HCT116 (cell line): ENCODE measurements at regions of chr12 and their contacts with region 1.

Region 1: DNA sequence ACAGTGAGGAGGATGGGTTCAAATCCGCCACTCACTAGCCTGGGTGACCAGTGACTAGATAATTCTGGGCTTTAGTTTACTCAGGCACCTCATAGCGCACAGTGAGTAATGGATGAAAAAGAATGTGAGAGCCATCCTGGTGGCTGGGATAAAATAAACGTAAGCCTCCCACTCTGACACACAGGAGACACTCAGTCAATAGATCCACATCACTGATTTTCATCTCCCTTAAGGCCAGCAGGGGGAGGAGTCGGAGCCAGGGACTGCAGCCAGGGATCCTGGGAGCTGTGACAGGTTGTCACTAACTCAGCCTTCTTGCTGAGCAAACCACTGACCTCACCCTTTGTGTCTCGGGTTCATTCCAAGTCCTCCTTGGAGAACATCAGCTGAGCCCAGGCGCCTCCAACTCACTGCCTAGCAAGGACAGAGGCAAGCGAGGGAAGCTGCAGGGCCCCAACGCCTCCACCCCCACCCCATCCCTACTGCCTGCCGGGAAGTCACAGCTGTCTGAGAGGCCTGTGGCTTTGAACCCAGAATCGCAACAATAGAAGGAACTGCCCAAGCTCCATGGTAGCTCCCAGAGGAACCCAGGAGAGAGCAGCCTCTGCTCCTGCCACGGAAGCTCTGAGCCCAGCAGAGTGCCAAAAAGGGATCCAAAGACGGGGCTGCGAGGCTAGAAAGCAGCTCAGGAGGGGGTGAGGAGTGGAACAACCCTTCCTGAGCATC is 30.7 kb downstream of the PXN start:
- DNase-seq: peak; percentile 61
- ATAC-seq: peak; percentile 32
- H3K4me3 ChIP-seq: peak overlapping the region in 1 of 2 experiments; percentile 11; a peak in 1 of 4 replicates
- H3K27ac ChIP-seq: peak overlapping the region; percentile 100
- H3K4me1 ChIP-seq: peaks cover 88 to 99% of the 10 kb centered on the region in 2 experiments
- H3K27me3 ChIP-seq: no peaks in the 10 kb centered on the region
- CTCF ChIP-seq: peak in 2 of 3 experiments; percentile 56 to 60; a peak in 4 of 6 replicates
- POLR2A ChIP-seq: no peak
- RAD21 ChIP-seq: no peak

Region 2: DNA sequence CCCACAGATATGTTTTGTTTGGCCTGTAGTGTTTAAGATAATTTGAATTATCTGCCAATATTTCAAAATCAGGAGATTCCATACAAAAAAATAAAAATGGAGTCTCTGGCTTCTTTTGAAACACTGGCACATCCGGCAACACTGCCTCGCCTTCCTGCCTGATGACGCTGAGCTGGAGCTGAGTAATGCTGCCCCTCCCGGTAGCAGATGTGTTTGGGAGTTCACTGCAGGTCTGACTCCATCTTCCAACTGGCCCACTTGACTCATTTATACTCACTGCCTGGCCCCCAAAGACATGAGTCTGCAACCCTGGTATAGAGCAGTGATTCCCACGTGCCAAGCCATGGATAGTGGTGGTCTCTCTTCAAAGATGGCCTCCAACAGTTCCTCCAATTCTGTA is 365.1 kb before region 1 on chr12:
- CTCF ChIA-PET with region 1: no interaction called
- POLR2A ChIA-PET with region 1: no interaction called
- RAD21 ChIA-PET with region 1: no interaction called
- intact Hi-C with region 1: no loop called
- DNase-seq: peak; percentile 12
- ATAC-seq: peak; percentile 89
- H3K4me3 ChIP-seq: no peak overlapping the region
- H3K27ac ChIP-seq: no peak overlapping the region
- H3K4me1 ChIP-seq: peaks cover 2 to 12% of the 10 kb centered on the region in 2 experiments; a peak in 2 of 4 replicates
- H3K27me3 ChIP-seq: no peaks in the 10 kb centered on the region
- CTCF ChIP-seq: 0 out of 6 replicates have a peak, but pooled peaks of 1 of the 3 experiments have one; percentile 13
- POLR2A ChIP-seq: no peak
- RAD21 ChIP-seq: no peak

Region 3: GRCh38 chr12:120249875-120250795 is 15.3 kb after region 1 on chr12:
- CTCF ChIA-PET with region 1: interaction called, 21 read pairs
- POLR2A ChIA-PET with region 1: interaction called, 22 read pairs
- RAD21 ChIA-PET with region 1: interaction called in 1 of 2 experiments, 4 read pairs
- intact Hi-C with region 1: no loop called
- DNase-seq: no peak
- ATAC-seq: no peak
- H3K4me3 ChIP-seq: no peak overlapping the region
- H3K27ac ChIP-seq: peak overlapping the region; percentile 72
- H3K4me1 ChIP-seq: peaks cover 53 to 84% of the 10 kb centered on the region in 2 experiments
- H3K27me3 ChIP-seq: no peaks in the 10 kb centered on the region
- CTCF ChIP-seq: no peak
- POLR2A ChIP-seq: no peak
- RAD21 ChIP-seq: no peak

Region 4: GRCh38 chr12:120265473-120266179 is 30.8 kb after region 1 on chr12 and contains the start of gene PXN:
- CTCF ChIA-PET with region 1: interaction called, 181 read pairs
- POLR2A ChIA-PET with region 1: interaction called, 123 read pairs
- RAD21 ChIA-PET with region 1: interaction called, 33 to 62 read pairs
- intact Hi-C with region 1: no loop called
- DNase-seq: peak; percentile 67
- ATAC-seq: peak; percentile 84
- H3K4me3 ChIP-seq: peak within 1 kb of the TSS; percentile 66 to 85
- H3K27ac ChIP-seq: peak within 1 kb of the TSS; percentile 93
- H3K4me1 ChIP-seq: peaks cover 41 to 55% of the 10 kb centered on the region in 2 experiments
- H3K27me3 ChIP-seq: no peaks in the 10 kb centered on the region
- CTCF ChIP-seq: peak in 2 of 3 experiments; percentile 73 to 80; a peak in 4 of 6 replicates
- POLR2A ChIP-seq: peak; percentile 14
- RAD21 ChIP-seq: no peak
- total RNA-seq, gene PXN: 211 TPM

Region 5: DNA sequence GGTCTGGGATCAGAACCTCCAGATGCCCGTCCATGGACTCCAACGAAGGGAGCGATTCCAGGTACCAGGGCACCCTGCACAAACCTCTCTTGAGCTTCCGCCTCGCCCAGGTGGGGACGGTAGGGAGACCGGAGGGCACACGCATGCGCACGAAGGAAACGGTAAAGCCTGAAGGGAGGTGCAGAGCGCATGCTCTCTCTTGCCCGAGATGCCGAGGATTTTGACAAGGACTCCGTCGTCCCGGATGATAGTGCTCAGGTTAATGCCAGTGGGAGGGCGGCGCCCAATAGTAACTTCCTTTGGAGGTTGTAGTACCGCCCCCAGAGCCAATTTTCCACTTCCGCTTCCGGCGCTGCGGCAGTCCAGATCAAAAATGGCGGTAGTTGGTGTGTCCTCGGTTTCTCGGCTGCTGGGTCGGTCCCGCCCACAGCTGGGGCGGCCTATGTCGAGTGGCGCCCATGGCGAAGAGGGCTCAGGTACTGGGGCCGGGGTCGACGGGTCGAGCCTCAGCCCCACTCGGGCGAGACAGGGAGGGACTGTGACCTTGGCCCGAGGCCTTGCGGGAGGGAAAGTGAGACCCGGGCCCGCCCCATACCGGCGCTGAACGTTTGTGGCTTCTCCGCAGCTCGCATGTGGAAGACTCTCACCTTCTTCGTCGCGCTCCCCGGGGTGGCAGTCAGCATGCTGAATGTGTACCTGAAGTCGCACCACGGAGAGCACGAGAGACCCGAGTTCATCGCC is 203.1 kb after region 1 on chr12 and contains the start of gene COX6A1:
- CTCF ChIA-PET with region 1: no interaction called
- POLR2A ChIA-PET with region 1: no interaction called
- RAD21 ChIA-PET with region 1: no interaction called
- intact Hi-C with region 1: loop called (anchors 10 kb)
- DNase-seq: peak; percentile 99
- ATAC-seq: peak; percentile 96
- H3K4me3 ChIP-seq: peak within 1 kb of the TSS; percentile 65 to 71
- H3K27ac ChIP-seq: peak within 1 kb of the TSS; percentile 81
- H3K4me1 ChIP-seq: peaks cover 8 to 26% of the 10 kb centered on the region in 2 experiments
- H3K27me3 ChIP-seq: no peaks in the 10 kb centered on the region
- CTCF ChIP-seq: 0 out of 6 replicates have a peak, but pooled peaks of 1 of the 3 experiments have one; percentile 9
- POLR2A ChIP-seq: peak; percentile 92
- RAD21 ChIP-seq: no peak
- total RNA-seq, gene COX6A1: 464 TPM